Activated T-helper 2 cell treated with anti-CD3 and anti-CD28 coated beads, Interferon-gamma antibody, Interleukin-2, Interleukin-4, amounts not matched to agents 10 μg/mL and 5 μg/mL and 100 μg/mL, durations not matched to agents 14 hours and 24 hours and 36 hours (primary cell): ENCODE measurements at regions of chr15 and their contacts with region 1.

Region 1: GRCh38 chr15:84734794-84735479 is 13.5 kb upstream of the ZNF592 start:
- DNase-seq: peak; percentile 72
- H3K4me3 Mint-ChIP-seq: peak overlapping the region; percentile 59
- H3K27ac Mint-ChIP-seq: peak overlapping the region; percentile 95
- H3K4me1 Mint-ChIP-seq: peaks cover 40% of the 10 kb centered on the region
- H3K27me3 Mint-ChIP-seq: no peaks in the 10 kb centered on the region

Region 2: GRCh38 chr15:84669726-84670125 is 65.2 kb before region 1 on chr15:
- intact Hi-C with region 1: loop called (anchors 1 kb)
- DNase-seq: no peak
- H3K4me3 Mint-ChIP-seq: no peak overlapping the region
- H3K27ac Mint-ChIP-seq: peak overlapping the region; percentile 64
- H3K4me1 Mint-ChIP-seq: peaks cover 36% of the 10 kb centered on the region
- H3K27me3 Mint-ChIP-seq: no peaks in the 10 kb centered on the region

Region 3: GRCh38 chr15:84748274-84749110 is 13.6 kb after region 1 on chr15 and contains the start of gene ZNF592:
- intact Hi-C with region 1: loop called (anchors 1 kb)
- DNase-seq: peak; percentile 76
- H3K4me3 Mint-ChIP-seq: peak within 1 kb of the TSS; percentile 94
- H3K27ac Mint-ChIP-seq: peak within 1 kb of the TSS; percentile 97
- H3K4me1 Mint-ChIP-seq: peaks cover 47% of the 10 kb centered on the region
- H3K27me3 Mint-ChIP-seq: no peaks in the 10 kb centered on the region
- total RNA-seq, gene ZNF592: 29.3 and 31.3 TPM in 2 replicates